Astrocyte of the spinal cord (primary cell): ENCODE measurements at regions of chr1 and their contacts with region 1.

Region 1: DNA sequence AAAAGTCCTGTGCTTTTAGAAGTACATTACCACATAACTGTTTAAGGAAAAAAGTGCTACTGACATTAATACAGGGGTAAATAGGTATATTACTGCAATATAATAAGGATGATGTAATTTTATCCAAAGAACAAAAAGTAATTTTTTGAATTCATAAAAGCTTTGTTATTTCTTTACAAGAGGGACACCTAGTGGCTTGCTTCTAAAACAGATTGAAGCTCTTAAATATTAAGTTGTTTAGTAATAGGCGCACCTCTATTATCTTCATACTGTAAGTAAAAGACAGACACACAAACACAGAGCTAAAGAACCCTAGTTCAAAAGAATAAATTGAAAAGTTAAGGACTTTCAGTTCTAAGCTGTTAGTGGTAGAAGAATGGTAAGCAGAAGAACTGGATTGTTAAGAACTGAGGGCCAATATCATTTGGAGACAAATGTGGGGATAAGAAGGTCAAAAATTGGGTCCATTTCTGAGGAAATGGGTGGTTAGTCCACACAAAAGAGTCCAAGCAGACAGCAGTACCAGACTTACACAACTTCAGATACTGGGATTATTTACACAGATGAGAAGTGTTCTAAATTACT is 15.4 kb downstream of the ZNHIT6 start:
- DNase-seq: peak; percentile 80
- H3K4me3 ChIP-seq: no peak overlapping the region
- CTCF ChIP-seq: peak; percentile 35

Region 2: DNA sequence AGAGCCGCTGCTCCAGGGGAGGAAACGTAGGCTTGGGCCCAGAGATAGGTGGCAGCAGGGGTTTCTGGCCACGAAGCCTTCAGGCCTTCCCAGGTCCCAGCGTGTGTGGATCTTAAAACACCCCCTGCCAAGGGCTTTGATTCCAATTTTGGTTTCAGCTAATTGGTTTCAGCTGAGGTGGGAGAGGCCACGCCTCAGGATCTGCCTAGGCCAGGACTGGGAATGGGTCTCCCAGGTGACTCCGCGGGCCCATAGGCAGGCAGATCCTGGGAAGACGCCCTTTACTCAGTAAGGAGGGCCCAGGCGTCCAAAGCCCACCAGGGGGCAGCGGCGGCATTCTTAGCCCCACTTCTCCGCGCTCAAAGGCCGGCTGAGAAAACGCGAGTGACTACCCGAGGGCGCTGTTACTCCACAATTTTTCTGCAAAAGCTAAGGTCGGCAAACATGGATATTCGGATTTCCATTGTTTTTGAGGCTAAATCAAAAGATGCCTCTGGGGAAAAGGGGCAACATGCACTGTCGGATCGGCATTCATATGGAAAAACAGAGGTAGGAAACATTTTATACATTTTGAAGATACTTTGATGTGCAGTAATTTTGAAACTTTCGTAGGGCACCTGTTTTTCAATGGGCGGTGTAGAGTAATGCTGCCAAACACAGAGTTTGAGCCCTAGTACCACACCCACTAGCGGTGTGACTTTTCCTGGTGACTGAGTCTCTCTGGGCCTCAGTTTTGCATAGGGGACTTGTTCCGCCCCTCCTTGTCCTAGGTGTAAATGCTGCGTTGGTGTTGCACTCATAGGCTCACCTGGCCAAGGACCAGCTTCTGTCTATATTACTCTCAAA is 384.6 kb before region 1 on chr1:
- in situ Hi-C with region 1: loop called (anchors 25 kb)
- DNase-seq: peak; percentile 89
- H3K4me3 ChIP-seq: no peak overlapping the region
- CTCF ChIP-seq: peak; percentile 99

Region 3: DNA sequence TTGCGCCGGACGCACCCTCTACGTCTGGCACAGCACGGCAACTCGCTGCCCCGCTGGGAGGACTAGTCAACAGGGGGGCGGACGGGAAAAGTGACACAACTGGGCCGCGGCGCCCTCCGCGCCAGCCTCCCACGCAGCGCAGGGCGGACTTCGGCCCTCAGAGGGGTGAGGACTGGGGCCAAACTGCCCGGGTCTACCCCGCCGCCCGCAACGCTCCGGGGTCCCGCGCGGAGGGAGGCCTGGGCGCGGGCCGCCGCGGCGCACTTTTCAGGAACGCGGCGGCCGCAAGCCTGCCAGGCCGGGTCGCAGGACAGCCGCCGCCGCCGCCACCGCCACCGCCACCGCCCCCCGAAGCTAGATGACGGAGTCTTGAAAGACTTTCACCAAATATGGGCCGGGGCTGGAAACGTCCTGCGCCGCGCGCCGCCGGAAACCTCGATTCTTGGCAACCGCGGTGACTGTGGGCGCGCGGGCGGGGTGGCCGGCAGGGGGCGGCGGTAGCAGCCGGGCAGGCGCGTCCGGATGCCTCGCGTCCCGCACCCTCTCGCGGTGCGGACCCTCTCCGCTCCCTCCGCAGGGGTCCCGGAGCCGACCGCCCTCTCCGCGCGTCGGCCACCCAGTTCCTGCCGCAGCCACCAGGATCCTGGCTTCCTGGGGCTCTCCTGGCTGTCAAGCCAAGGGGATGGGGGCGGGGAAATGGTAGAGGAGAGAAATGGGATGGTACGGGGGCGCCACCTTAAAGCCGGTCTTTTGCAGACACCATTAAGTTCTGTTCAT is 116.0 kb before region 1 on chr1:
- in situ Hi-C with region 1: no loop called
- DNase-seq: peak; percentile 94
- H3K4me3 ChIP-seq: peak overlapping the region; percentile 63
- CTCF ChIP-seq: peak; percentile 56